ENCODE measurements at regions of chr1 and their contacts with region 1.

Region 1: GRCh38 chr1:45512641-45513054 is 9.0 kb downstream of the PRDX1 start:
- DNase-seq: no peak
- ATAC-seq: peak; percentile 86
- H3K4me3 ChIP-seq: no peak overlapping the region
- H3K27ac ChIP-seq: no peak overlapping the region
- H3K4me1 ChIP-seq: no peaks in the 10 kb centered on the region
- H3K27me3 ChIP-seq: no peaks in the 10 kb centered on the region
- CTCF ChIP-seq: peak; percentile 74 to 80 (median 75)
- EP300 ChIP-seq: no peak
- POLR2A ChIP-seq: no peak
- RAD21 ChIP-seq: peak; percentile 82

Region 2: GRCh38 chr1:45370575-45370974 is 142.1 kb before region 1 on chr1:
- CTCF ChIA-PET with region 1: no interaction called
- POLR2A ChIA-PET with region 1: no interaction called
- RAD21 ChIA-PET with region 1: no interaction called
- SMC1A ChIA-PET with region 1: no interaction called
- in situ Hi-C with region 1: no loop called
- intact Hi-C with region 1: no loop called
- DNase-seq: peak; percentile 39
- ATAC-seq: peak; percentile 85
- H3K4me3 ChIP-seq: no peak overlapping the region
- H3K27ac ChIP-seq: peak overlapping the region; percentile 3
- H3K4me1 ChIP-seq: peaks cover 41% of the 10 kb centered on the region
- H3K27me3 ChIP-seq: no peaks in the 10 kb centered on the region
- CTCF ChIP-seq: no peak
- EP300 ChIP-seq: no peak
- POLR2A ChIP-seq: no peak
- RAD21 ChIP-seq: no peak

Region 3: DNA sequence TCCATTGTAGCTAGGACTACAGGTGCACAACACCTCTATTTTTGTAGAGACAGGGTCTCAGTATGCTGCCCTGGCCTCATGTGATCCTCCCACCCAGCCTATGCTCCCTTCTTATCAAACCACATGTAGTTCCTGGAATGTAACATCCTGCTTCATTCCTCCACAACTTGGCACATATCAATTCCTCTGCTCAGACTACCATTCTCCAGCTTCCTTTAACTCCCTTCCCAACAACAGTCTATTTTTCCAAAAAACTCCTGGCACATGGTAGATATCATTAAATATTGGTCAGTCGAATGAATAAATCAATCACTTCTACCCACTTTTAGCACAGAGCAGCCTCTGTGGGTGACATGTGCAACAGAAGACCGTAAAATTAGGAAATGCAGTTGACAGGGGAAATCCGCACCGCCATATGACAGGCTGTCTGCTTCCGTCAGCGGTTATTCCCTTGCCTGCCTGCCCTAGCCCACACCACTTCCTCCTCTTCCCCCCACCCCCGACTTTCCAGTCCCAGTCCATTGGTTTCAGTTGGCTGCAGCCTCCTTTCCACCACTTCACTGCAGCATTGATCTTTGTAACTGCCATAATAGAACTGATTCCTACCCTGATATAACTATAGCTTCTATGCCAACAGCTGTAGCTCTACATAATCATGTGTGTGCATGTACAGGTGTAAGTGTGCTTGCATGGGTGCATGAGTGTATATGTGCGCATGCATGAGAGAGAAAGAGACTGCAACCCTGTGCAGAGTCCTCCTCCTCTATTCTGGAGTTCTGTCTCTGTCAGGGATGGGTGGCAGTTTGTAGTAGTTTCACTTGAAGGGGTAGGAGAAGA is 31.2 kb after region 1 on chr1:
- CTCF ChIA-PET with region 1: interaction called, 14 read pairs
- POLR2A ChIA-PET with region 1: interaction called, 15 read pairs
- RAD21 ChIA-PET with region 1: interaction called, 4 read pairs
- SMC1A ChIA-PET with region 1: interaction called, 80 read pairs
- in situ Hi-C with region 1: no loop called
- intact Hi-C with region 1: no loop called
- DNase-seq: peak; percentile 76
- ATAC-seq: peak; percentile 79
- H3K4me3 ChIP-seq: peak overlapping the region; percentile 25; the same call in 1 of the 2 replicates
- H3K27ac ChIP-seq: peak overlapping the region; percentile 78
- H3K4me1 ChIP-seq: peaks cover 30% of the 10 kb centered on the region
- H3K27me3 ChIP-seq: no peaks in the 10 kb centered on the region
- CTCF ChIP-seq: no peak
- EP300 ChIP-seq: peak; percentile 84 to 93
- POLR2A ChIP-seq: 0 out of 2 replicates have a peak, but pooled peaks have one; percentile 29
- RAD21 ChIP-seq: no peak

Region 4: DNA sequence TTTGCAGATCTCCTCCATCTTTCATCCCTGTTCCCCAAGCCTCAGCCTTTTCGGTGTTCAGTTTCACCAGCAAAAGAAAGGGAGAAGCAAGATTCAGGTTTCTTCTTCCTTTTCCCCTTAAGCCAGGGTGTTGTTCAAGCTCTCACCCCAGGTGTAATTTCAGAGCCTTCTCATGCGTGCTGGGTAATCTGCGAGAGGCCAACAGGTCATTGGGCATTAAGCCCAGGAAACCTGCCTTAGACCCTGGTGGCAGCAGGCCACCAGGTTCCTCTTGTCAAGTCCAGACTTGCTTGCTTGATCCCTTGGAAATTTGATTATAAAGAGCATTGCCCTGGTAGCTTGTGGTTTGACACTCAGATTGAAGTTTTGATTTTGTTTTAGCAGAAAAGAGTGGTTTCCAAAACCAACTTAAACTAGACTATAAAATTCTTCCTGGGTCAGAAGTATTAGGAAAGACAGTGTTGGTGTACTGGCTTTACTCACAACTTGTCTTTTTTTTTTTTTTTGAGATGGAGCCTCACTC is 44.8 kb after region 1 on chr1:
- CTCF ChIA-PET with region 1: interaction called, 212 read pairs
- POLR2A ChIA-PET with region 1: interaction called, 105 read pairs
- RAD21 ChIA-PET with region 1: interaction called, 4 read pairs
- SMC1A ChIA-PET with region 1: interaction called, 22 read pairs
- in situ Hi-C with region 1: no loop called
- intact Hi-C with region 1: no loop called
- DNase-seq: no peak
- ATAC-seq: peak; percentile 65
- H3K4me3 ChIP-seq: no peak overlapping the region
- H3K27ac ChIP-seq: peak overlapping the region; percentile 69
- H3K4me1 ChIP-seq: peaks cover 7% of the 10 kb centered on the region
- H3K27me3 ChIP-seq: no peaks in the 10 kb centered on the region
- CTCF ChIP-seq: no peak
- EP300 ChIP-seq: no peak
- POLR2A ChIP-seq: no peak
- RAD21 ChIP-seq: no peak

Region 5: DNA sequence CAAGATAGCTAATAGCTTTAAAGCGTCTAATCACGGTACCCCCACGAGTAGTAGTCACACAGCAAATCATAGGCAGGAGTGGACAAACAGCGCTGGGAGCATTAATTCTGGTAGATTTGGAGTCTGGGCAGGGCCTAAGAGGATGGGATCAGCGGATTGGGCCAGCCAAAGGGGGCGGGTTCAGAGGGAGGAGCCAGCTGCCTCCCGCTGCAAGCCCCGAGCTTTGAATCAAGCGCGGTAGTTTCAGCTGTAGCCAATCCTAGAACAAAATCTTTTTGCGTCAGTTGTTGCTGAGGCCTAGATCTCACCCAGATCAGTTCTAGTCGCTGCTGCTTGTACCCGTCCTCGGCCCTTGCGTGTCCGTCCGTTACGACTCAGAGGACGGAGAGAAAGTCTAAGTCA is 70.6 kb after region 1 on chr1:
- CTCF ChIA-PET with region 1: interaction called, 35 read pairs
- POLR2A ChIA-PET with region 1: interaction called, 4 read pairs
- RAD21 ChIA-PET with region 1: interaction called, 24 read pairs
- SMC1A ChIA-PET with region 1: interaction called, 35 read pairs
- in situ Hi-C with region 1: no loop called
- intact Hi-C with region 1: no loop called
- DNase-seq: peak; percentile 98
- ATAC-seq: peak; percentile 89
- H3K4me3 ChIP-seq: peak overlapping the region; percentile 94
- H3K27ac ChIP-seq: peak overlapping the region; percentile 97
- H3K4me1 ChIP-seq: peaks cover 12% of the 10 kb centered on the region; the same call in 1 of the 2 replicates
- H3K27me3 ChIP-seq: no peaks in the 10 kb centered on the region
- CTCF ChIP-seq: no peak
- EP300 ChIP-seq: no peak
- POLR2A ChIP-seq: no peak
- RAD21 ChIP-seq: no peak

Region 6: DNA sequence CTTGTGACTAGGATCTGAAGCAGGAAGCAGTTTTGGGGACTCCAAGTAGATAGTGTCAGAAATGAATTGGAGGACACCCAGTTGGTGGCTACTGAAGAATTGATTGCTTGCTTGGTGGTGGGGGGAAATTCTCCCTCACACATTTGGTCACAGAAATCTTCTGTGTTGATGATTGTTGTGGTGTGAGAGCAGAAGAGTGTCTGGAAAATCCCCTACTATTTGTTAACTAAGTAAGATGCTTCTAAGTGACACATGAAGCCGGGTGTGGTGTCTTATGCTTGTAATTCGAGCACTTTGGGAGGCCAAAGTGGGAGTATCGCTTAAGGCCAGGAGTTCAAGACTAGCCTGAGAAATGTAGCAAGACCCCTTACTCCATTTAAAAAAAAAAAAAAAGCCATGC is 260.3 kb after region 1 on chr1:
- CTCF ChIA-PET with region 1: no interaction called
- POLR2A ChIA-PET with region 1: no interaction called
- RAD21 ChIA-PET with region 1: no interaction called
- SMC1A ChIA-PET with region 1: no interaction called
- in situ Hi-C with region 1: no loop called
- intact Hi-C with region 1: no loop called
- DNase-seq: peak; percentile 38
- ATAC-seq: peak; percentile 86
- H3K4me3 ChIP-seq: no peak overlapping the region
- H3K27ac ChIP-seq: no peak overlapping the region
- H3K4me1 ChIP-seq: no peaks in the 10 kb centered on the region
- H3K27me3 ChIP-seq: no peaks in the 10 kb centered on the region
- CTCF ChIP-seq: no peak
- EP300 ChIP-seq: no peak
- POLR2A ChIP-seq: no peak
- RAD21 ChIP-seq: no peak

Measured in GM12878 (cell line).